CD14-positive monocyte (primary cell): ENCODE measurements at regions of chr17 and their contacts with region 1.

Region 1: GRCh38 chr17:31596382-31597323 is 205.2 kb downstream of the RAB11FIP4 start:
- DNase-seq: peak; percentile 95 to 98 (median 96)
- H3K4me3 ChIP-seq: no peak overlapping the region
- H3K4me3 Mint-ChIP-seq: peak overlapping the region in 1 of 2 donors; percentile 21
- H3K27ac ChIP-seq: peak overlapping the region; percentile 83 to 92
- H3K27ac Mint-ChIP-seq: peak overlapping the region; percentile 83 to 96 (median 89)
- H3K4me1 ChIP-seq: peaks cover 20 to 24% of the 10 kb centered on the region in 2 donors
- H3K4me1 Mint-ChIP-seq: peaks cover 27% of the 10 kb centered on the region
- H3K27me3 ChIP-seq: no peaks in the 10 kb centered on the region
- H3K27me3 Mint-ChIP-seq: no peaks in the 10 kb centered on the region
- CTCF ChIP-seq: no peak

Region 2: DNA sequence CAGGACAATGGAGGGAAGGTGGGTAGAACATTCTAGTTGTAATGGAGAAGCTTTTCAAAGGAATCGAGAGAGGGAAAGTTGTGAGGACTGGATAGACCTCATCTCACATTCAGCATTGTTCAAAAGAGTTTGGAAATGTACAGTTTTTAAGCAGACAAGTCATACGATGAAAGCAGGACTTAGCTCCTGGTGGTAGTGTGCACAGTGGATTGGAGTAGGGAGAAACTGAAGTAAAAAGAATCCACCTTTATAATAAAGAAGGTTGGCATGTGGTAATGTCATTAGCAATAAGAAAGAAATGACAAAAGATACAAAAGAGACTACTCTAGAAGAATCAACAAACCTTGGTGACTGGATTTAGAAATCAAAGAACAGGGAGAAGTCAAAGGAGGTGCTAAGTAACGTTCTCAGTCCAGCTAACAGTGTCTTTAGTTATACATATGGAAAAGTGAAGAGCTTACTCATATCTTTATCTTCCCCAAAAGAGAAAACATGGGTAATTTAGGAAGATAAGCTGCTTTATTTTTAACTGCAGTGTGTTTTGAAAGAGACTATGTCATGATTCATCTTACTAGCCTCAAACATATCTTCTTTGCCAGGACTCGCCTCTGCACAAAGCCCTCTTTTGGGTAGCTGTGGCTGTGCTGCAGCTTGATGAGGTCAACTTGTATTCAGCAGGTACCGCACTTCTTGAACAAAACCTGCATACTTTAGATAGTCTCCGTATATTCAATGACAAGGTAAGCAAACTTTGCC is 256.6 kb before region 1 on chr17:
- intact Hi-C with region 1: no loop called
- DNase-seq: peak in 1 of 3 donors; percentile 11
- H3K4me3 ChIP-seq: no peak overlapping the region
- H3K4me3 Mint-ChIP-seq: no peak overlapping the region
- H3K27ac ChIP-seq: peak overlapping the region in 1 of 2 donors; percentile 33
- H3K27ac Mint-ChIP-seq: peak overlapping the region in 3 of 7 donors; percentile 11 to 20 (median 19)
- H3K4me1 ChIP-seq: peaks cover 3 to 16% of the 10 kb centered on the region in 2 donors
- H3K4me1 Mint-ChIP-seq: peaks cover 12% of the 10 kb centered on the region
- H3K27me3 ChIP-seq: no peaks in the 10 kb centered on the region
- H3K27me3 Mint-ChIP-seq: no peaks in the 10 kb centered on the region
- CTCF ChIP-seq: no peak

Region 3: DNA sequence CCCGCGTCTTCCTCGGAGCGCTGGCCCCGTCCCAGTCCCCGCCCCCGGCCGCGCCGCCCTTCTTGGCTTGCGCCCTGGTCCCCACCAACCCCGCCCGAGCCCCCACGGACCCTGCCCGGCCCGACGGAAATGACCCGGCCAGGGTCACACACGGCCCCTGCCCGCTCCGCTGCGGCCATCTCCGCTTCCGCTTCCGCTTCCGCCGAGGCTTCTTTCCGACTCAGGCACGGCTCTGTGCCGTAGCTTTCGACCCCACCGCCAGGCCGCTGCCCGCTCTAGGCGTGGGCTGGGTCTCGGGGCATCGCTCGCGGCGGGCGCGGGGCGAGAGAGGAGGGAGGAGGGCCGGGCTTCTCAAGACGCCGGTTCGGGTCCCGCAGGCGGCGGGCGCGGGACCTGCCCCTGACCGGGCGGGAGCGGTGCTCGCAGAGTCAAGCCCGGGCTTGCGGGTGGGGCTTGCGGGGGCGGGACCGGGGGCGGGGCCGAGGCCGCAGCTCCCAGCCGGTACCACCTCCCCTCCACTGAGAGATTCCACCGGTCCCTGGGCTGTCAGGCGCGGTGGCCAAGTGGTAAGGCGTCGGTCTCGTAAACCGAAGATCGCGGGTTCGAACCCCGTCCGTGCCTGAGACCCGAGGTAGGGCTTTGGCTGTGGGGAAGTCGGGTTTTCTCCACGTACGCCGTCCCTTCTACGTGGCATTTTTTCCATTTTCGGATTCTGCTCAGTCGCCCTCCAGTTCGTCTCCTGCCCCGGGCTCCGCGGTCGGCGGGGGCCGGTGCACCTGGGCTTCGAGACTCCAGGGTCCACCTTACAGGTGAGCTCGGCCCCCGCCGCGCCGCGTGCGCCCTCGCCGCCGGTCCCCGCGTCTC is 46.9 kb before region 1 on chr17:
- intact Hi-C with region 1: loop called in 1 of 2 experiments (anchors 5 kb)
- DNase-seq: peak; percentile 82 to 88 (median 87)
- H3K4me3 ChIP-seq: peak overlapping the region; percentile 64 to 93 (median 90)
- H3K4me3 Mint-ChIP-seq: peak overlapping the region; percentile 87 to 91
- H3K27ac ChIP-seq: peak overlapping the region; percentile 65 to 90
- H3K27ac Mint-ChIP-seq: peak overlapping the region; percentile 76 to 93 (median 88)
- H3K4me1 ChIP-seq: peaks cover 17 to 19% of the 10 kb centered on the region in 2 donors
- H3K4me1 Mint-ChIP-seq: peaks cover 25% of the 10 kb centered on the region
- H3K27me3 ChIP-seq: no peaks in the 10 kb centered on the region
- H3K27me3 Mint-ChIP-seq: peaks cover 3 to 5% (median 4%) of the 10 kb centered on the region in 3 donors
- CTCF ChIP-seq: no peak

Region 4: GRCh38 chr17:31558748-31559644 is 37.7 kb before region 1 on chr17:
- intact Hi-C with region 1: loop called (anchors 2 to 5 kb)
- DNase-seq: peak; percentile 67 to 87 (median 78)
- H3K4me3 ChIP-seq: peak overlapping the region; percentile 44 to 74 (median 62)
- H3K4me3 Mint-ChIP-seq: peak overlapping the region; percentile 66 to 80
- H3K27ac ChIP-seq: peak overlapping the region; percentile 56 to 78
- H3K27ac Mint-ChIP-seq: peak overlapping the region in 6 of 7 donors; percentile 48 to 80 (median 65)
- H3K4me1 ChIP-seq: peaks cover 38 to 46% of the 10 kb centered on the region in 2 donors
- H3K4me1 Mint-ChIP-seq: peaks cover 37% of the 10 kb centered on the region
- H3K27me3 ChIP-seq: no peaks in the 10 kb centered on the region
- H3K27me3 Mint-ChIP-seq: peaks cover 5 to 11% (median 6%) of the 10 kb centered on the region in 3 donors
- CTCF ChIP-seq: peak; percentile 88

Region 5: DNA sequence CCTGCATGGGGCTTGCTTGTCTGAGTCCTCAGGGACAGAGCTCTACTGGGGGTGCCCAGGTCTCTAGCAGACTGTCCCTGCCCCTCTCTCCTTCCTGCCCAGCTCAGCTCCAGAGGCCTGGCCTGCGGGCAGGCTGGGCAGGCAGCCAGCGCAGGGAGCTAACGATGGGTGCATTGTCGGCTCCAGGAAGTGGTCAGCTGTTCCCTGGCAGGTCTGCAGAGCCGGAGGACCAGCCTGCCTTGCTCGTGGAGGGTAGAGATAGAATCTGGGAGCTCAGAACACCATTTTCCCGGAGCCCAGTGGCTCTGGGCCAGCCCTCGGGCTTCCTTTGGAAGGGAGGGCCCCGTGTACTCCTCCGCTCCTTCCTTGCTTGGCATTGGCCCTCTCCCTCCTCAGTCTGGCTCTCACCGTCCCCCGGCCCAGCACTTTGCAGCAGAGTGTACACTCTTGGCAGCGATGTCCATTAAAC is 15.6 kb before region 1 on chr17:
- intact Hi-C with region 1: loop called in 1 of 2 experiments (anchors 1 kb)
- DNase-seq: peak in 1 of 3 donors; percentile 47
- H3K4me3 ChIP-seq: peak overlapping the region in 1 of 3 experiments; percentile 49
- H3K4me3 Mint-ChIP-seq: peak overlapping the region in 1 of 2 donors; percentile 67
- H3K27ac ChIP-seq: peak overlapping the region; percentile 93 to 95
- H3K27ac Mint-ChIP-seq: peak overlapping the region; percentile 93 to 98 (median 97)
- H3K4me1 ChIP-seq: peaks cover 65 to 71% of the 10 kb centered on the region in 2 donors
- H3K4me1 Mint-ChIP-seq: peaks cover 68% of the 10 kb centered on the region
- H3K27me3 ChIP-seq: no peaks in the 10 kb centered on the region
- H3K27me3 Mint-ChIP-seq: peaks cover 0 to 1% (median 0%) of the 10 kb centered on the region in 3 donors
- CTCF ChIP-seq: no peak

Region 6: GRCh38 chr17:31678431-31678830 is 81.8 kb after region 1 on chr17:
- intact Hi-C with region 1: loop called in 1 of 2 experiments (anchors 1 kb)
- DNase-seq: peak; percentile 40 to 84 (median 53)
- H3K4me3 ChIP-seq: no peak overlapping the region
- H3K4me3 Mint-ChIP-seq: no peak overlapping the region
- H3K27ac ChIP-seq: no peak overlapping the region
- H3K27ac Mint-ChIP-seq: peak overlapping the region in 1 of 7 donors; percentile 81
- H3K4me1 ChIP-seq: peaks cover 10 to 11% of the 10 kb centered on the region in 2 donors
- H3K4me1 Mint-ChIP-seq: peaks cover 12% of the 10 kb centered on the region
- H3K27me3 ChIP-seq: peaks cover 0 to 2% of the 10 kb centered on the region in 2 donors
- H3K27me3 Mint-ChIP-seq: peaks cover 9 to 30% (median 11%) of the 10 kb centered on the region in 3 donors
- CTCF ChIP-seq: no peak